ENCODE measurements at regions of chr11 and their contacts with region 1.

Region 1: GRCh38 chr11:47523468-47524225 is 29.3 kb downstream of the CELF1 start:
- DNase-seq: peak; percentile 93
- H3K4me3 ChIP-seq: no peak overlapping the region
- H3K27ac ChIP-seq: peak overlapping the region; percentile 61
- H3K4me1 ChIP-seq: peaks cover 32% of the 10 kb centered on the region
- H3K27me3 ChIP-seq: no peaks in the 10 kb centered on the region
- CTCF ChIP-seq: no peak
- POLR2A ChIP-seq: no peak

Region 2: GRCh38 chr11:47512701-47513100 is 10.9 kb before region 1 on chr11:
- CTCF ChIA-PET with region 1: interaction called, 10 read pairs
- POLR2A ChIA-PET with region 1: interaction called, 3 read pairs
- dilution Hi-C with region 1: no loop called
- intact Hi-C with region 1: no loop called
- DNase-seq: no peak
- H3K4me3 ChIP-seq: no peak overlapping the region
- H3K27ac ChIP-seq: peak overlapping the region; percentile 0
- H3K4me1 ChIP-seq: peaks cover 17% of the 10 kb centered on the region
- H3K27me3 ChIP-seq: no peaks in the 10 kb centered on the region
- CTCF ChIP-seq: no peak
- POLR2A ChIP-seq: no peak

Region 3: DNA sequence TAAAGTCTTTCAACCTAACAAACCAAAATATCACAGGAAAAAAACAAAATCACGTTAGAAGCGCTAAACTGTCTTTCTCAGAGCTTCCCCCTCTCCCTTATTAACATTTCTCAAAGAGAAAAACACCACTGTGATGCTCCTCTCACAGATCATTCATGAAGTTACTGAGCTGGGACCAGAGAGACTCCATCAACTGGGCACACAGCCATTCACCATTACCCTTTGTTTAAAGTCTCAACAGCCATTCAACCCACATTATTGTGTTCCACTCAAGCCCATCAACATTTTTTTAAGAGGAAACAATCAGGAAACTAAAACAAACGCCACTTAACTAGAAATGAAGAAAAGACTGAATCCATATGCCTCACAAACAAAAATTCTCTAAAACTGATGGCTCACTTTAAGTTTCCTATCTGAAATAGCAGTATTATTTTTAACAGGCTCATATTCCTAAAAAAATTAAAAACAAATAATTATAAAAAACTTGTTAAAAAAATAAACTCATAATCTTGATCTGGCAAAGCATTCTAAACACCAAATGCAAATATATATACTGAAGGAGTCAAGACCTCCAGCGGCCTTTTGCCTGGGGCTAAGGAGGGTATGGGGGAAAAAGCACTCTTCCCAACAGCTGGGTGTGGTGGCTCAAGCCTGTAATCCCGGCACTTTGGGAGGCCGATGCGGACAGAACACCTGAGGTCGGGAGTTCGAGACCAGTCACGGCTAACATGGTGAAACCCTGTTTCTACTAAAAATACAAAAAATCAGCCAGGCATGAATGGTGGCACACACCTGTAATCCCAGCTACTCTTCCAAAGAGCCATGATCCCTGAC is 15.3 kb after region 1 on chr11:
- CTCF ChIA-PET with region 1: interaction called, 5 read pairs
- POLR2A ChIA-PET with region 1: interaction called, 6 read pairs
- dilution Hi-C with region 1: no loop called
- intact Hi-C with region 1: loop called (anchors 2 kb)
- DNase-seq: peak; percentile 81
- H3K4me3 ChIP-seq: no peak overlapping the region
- H3K27ac ChIP-seq: peak overlapping the region; percentile 58
- H3K4me1 ChIP-seq: peaks cover 27% of the 10 kb centered on the region
- H3K27me3 ChIP-seq: no peaks in the 10 kb centered on the region
- CTCF ChIP-seq: no peak
- POLR2A ChIP-seq: no peak

Measured in endothelial cell of umbilical vein (primary cell).